K562 (cell line): ENCODE measurements at regions of chr6 and their contacts with region 1.

Region 1: DNA sequence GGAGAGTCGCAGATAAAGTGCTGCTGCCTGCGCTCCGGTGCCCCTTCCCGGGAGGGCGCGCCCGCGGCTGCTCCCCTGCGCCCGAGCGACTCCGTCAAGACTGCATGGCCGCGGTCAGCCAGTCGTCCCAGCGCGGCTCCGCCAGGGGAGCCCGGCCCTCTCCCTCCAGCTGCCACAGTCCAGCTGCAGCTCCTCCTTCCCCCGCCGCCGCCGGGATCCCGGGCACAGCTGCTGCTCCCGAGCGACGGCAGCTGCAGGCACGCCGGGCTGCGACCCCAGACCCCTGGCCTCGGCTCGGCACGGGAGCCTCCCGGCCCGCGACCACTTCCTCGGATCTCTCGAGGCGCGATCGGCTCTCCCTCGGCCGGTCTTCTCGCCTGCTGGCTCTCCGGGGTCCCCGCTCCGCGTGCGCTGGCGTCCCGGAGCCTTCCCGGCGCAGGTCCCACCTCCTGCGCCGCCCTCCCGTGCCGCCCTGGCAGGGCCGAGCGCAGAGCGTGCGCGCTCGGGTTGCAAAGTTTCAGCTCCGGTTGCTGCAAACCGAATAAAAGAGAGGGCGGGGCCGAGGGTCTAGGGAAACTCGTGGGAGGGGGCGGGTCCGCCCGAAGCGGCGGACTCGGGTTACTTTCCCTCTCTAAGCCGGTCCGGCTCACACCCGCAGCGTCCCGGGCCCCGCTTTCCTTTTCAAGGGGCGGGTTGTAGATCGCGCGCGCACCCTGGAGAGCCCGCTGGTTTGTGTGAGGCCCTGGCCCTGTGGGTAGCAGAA is at the start of gene CNKSR3:
- DNase-seq: peak; percentile 89 to 95 (median 90)
- ATAC-seq: peak; percentile 85
- H3K4me3 ChIP-seq: peak within 1 kb of the TSS; percentile 69
- H3K27ac ChIP-seq: peak within 1 kb of the TSS; percentile 70
- H3K4me1 ChIP-seq: peaks cover 22 to 38% of the 10 kb centered on the region in 2 experiments; a peak in 4 of 5 replicates
- H3K27me3 ChIP-seq: no peaks in the 10 kb centered on the region
- CTCF ChIP-seq: peak in 1 of 3 experiments; percentile 24; a peak in 1 of 6 replicates
- EP300 ChIP-seq: peak; percentile 22; the same call in 1 of the 2 replicates
- POLR2A ChIP-seq: no peak; the same call in 1 of the 2 replicates
- RAD21 ChIP-seq: no peak
- polyA plus RNA-seq, gene CNKSR3: 4.5 to 5.3 TPM

Region 2: GRCh38 chr6:153989989-153990388 is 520.3 kb before region 1 on chr6:
- CTCF ChIA-PET with region 1: no interaction called
- POLR2A ChIA-PET with region 1: no interaction called
- in situ Hi-C with region 1: no loop called
- intact Hi-C with region 1: no loop called
- DNase-seq: no peak
- ATAC-seq: no peak
- H3K4me3 ChIP-seq: no peak overlapping the region
- H3K27ac ChIP-seq: no peak overlapping the region
- H3K4me1 ChIP-seq: no peaks in the 10 kb centered on the region
- H3K27me3 ChIP-seq: no peaks in the 10 kb centered on the region
- CTCF ChIP-seq: no peak
- EP300 ChIP-seq: no peak
- POLR2A ChIP-seq: no peak
- RAD21 ChIP-seq: no peak

Region 3: DNA sequence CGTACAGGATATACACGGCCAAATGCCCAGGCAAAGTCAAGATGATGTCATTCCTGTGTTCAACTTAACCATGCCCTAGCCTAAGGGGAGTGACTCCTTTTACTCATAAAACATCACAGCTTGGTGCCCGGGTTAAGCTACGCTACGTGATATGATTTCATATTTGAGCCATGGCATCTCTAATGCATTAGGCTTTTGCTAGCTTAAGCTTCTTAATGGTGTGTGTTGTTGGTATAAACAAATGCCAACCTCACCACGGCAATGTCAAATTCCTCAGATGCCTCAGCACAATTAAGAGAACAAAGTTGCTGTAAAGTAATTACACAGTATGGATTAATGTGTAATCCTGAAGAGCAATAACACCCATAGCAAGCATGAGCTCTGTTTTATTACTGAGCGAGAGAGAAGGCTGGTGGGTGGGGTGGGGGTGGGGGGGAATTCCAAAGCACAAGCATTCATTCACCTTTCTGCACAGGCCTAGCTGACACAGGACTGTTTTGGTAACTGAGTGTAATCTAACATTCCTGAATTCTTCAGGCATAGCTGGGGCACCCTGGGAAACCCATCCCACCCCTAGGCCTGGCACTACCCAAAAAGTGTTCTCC is 44.9 kb after region 1 on chr6:
- CTCF ChIA-PET with region 1: no interaction called
- POLR2A ChIA-PET with region 1: no interaction called
- in situ Hi-C with region 1: no loop called
- intact Hi-C with region 1: loop called (anchors 5 kb)
- DNase-seq: no peak
- ATAC-seq: no peak
- H3K4me3 ChIP-seq: no peak overlapping the region
- H3K27ac ChIP-seq: no peak overlapping the region
- H3K4me1 ChIP-seq: peaks cover 13 to 14% of the 10 kb centered on the region in 2 experiments; a peak in 4 of 5 replicates
- H3K27me3 ChIP-seq: no peaks in the 10 kb centered on the region; a peak in 1 of 5 replicates
- CTCF ChIP-seq: no peak
- EP300 ChIP-seq: no peak
- POLR2A ChIP-seq: no peak
- RAD21 ChIP-seq: no peak

Region 4: GRCh38 chr6:154593122-154593521 is 82.8 kb after region 1 on chr6:
- CTCF ChIA-PET with region 1: no interaction called
- POLR2A ChIA-PET with region 1: interaction called, 3 read pairs
- in situ Hi-C with region 1: no loop called
- intact Hi-C with region 1: loop called (anchors 5 kb)
- DNase-seq: peak; percentile 44 to 83 (median 67)
- ATAC-seq: peak; percentile 98
- H3K4me3 ChIP-seq: no peak overlapping the region
- H3K27ac ChIP-seq: peak overlapping the region; percentile 58
- H3K4me1 ChIP-seq: peaks cover 8 to 18% of the 10 kb centered on the region in 2 experiments; a peak in 3 of 5 replicates
- H3K27me3 ChIP-seq: no peaks in the 10 kb centered on the region
- CTCF ChIP-seq: no peak
- EP300 ChIP-seq: no peak
- POLR2A ChIP-seq: no peak
- RAD21 ChIP-seq: no peak

Region 5: DNA sequence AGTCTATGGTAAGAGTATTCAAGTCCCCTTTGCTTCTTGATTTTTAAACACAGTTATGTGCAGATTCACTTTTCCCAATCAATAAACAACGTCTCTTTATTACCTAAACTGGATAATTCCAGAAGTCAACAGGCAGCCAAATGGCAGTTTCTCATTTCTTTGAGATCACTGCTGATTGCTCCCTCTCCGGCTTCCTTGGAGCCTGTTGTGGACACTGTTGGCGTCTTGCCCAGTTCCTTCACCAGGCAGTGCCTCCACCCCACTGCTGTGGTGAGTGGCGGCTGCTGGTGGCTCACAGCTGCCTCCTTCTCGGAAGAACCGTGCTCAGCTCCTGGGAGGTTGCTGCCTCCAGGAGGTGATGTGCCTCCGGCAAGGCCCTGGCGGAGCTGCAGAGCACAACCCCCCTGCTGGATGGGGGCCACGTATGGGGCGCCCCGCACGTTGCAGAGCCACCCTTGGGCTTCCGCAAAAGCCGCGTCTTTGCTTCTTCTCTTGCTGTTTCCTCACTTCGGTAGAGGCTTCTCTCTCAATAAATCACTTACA is 105.2 kb after region 1 on chr6:
- CTCF ChIA-PET with region 1: no interaction called
- POLR2A ChIA-PET with region 1: interaction called, 5 read pairs
- in situ Hi-C with region 1: no loop called
- intact Hi-C with region 1: loop called (anchors 2 kb)
- DNase-seq: peak; percentile 60 to 93 (median 78)
- ATAC-seq: peak; percentile 96
- H3K4me3 ChIP-seq: peak overlapping the region; percentile 3; the same call in 1 of the 2 replicates
- H3K27ac ChIP-seq: peak overlapping the region; percentile 38; the same call in 1 of the 3 replicates
- H3K4me1 ChIP-seq: peaks cover 15 to 33% of the 10 kb centered on the region in 2 experiments
- H3K27me3 ChIP-seq: no peaks in the 10 kb centered on the region
- CTCF ChIP-seq: peak; percentile 72 to 97 (median 89)
- EP300 ChIP-seq: peak; percentile 50
- POLR2A ChIP-seq: no peak
- RAD21 ChIP-seq: peak; percentile 52 to 61